ENCODE measurements at regions of chr15 and their contacts with region 1.

Region 1: DNA sequence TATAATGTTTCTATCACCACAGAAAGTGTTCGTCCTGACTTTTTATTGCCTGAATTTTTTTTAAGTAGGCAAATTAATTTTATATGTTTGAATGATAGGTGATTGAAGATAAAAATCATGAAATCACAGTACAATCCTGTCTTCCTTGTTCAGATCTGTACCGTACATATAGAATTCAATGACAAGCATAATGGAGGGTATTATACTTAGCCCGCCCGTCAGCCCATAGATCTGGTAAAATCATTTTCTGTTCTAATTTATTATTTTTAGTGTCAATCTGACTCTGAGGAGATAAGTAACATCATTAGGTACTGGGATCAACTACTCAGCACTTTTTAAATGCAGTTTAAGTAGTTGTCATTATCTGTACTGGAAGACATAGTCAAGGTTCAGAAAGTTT is 269.9 kb downstream of the NR2F2 start:
- DNase-seq: no peak
- H3K4me3 ChIP-seq: no peak overlapping the region
- H3K27ac ChIP-seq: no peak overlapping the region
- H3K4me1 ChIP-seq: no peaks in the 10 kb centered on the region
- H3K27me3 ChIP-seq: no peaks in the 10 kb centered on the region
- CTCF ChIP-seq: no peak
- EP300 ChIP-seq: no peak
- POLR2A ChIP-seq: no peak

Region 2: DNA sequence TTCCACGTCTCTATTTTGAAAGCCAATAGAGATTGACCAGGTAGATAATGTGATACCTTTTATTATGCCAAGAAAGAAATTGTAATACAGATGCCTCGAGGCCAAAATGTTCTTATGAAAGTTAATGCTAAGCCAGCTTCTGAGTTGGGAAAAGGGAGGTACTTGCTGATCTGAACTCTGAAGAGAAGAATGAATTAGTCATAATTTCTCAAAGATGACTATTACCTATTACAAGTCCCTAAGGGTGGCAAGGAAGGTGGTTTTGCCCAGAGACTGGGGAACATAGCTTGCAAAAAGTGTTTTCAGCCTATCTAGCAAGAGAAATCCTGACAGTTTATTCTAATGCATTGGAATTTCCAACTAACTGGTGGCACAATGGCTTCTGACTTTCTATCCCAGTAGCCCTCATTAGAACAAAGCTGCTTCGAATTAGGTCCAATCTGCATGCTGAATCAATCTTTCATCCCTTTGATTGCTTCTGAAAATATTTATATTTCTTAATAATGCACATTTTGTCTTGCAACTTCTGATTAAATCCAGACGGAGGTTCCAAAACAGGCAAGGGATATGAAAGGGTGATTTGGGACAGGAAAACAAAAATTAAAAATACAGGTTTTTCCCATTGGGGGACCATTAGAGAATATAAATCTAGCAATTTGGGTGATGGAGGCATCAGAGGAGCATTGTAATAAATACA is 287.6 kb before region 1 on chr15:
- in situ Hi-C with region 1: no loop called
- intact Hi-C with region 1: no loop called
- DNase-seq: no peak
- H3K4me3 ChIP-seq: no peak overlapping the region
- H3K27ac ChIP-seq: no peak overlapping the region
- H3K4me1 ChIP-seq: no peaks in the 10 kb centered on the region
- H3K27me3 ChIP-seq: peaks cover 27% of the 10 kb centered on the region
- CTCF ChIP-seq: no peak
- EP300 ChIP-seq: no peak
- POLR2A ChIP-seq: no peak

Region 3: GRCh38 chr15:96622721-96623120 is 22.4 kb after region 1 on chr15:
- in situ Hi-C with region 1: no loop called
- intact Hi-C with region 1: loop called (anchors 1 kb)
- DNase-seq: no peak
- H3K4me3 ChIP-seq: no peak overlapping the region
- H3K27ac ChIP-seq: no peak overlapping the region
- H3K4me1 ChIP-seq: no peaks in the 10 kb centered on the region
- H3K27me3 ChIP-seq: no peaks in the 10 kb centered on the region
- CTCF ChIP-seq: no peak
- EP300 ChIP-seq: no peak
- POLR2A ChIP-seq: no peak

Region 4: DNA sequence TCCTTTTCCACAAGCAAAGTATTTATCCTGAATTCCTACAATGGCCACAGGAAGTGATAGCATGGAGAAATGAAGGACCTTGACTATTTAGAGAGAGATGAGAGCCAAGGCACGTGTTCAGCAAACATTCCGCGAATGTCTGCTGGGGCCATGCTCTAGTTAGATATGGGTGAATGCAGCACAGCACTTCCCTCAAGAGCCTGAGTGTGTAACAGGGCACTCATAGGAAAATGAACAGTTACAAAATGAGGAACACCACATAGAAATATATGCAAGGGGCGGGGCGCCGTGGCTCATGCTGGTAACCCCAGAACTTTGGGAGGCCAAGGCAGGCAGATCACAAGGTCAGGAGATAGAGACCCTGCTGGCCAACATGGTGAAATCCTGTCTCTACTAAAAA is 137.1 kb after region 1 on chr15:
- in situ Hi-C with region 1: no loop called
- intact Hi-C with region 1: no loop called
- DNase-seq: no peak
- H3K4me3 ChIP-seq: no peak overlapping the region
- H3K27ac ChIP-seq: no peak overlapping the region
- H3K4me1 ChIP-seq: no peaks in the 10 kb centered on the region
- H3K27me3 ChIP-seq: no peaks in the 10 kb centered on the region
- CTCF ChIP-seq: no peak
- EP300 ChIP-seq: no peak
- POLR2A ChIP-seq: no peak

Measured in transverse colon (tissue), 4 donors.